Left cardiac atrium (tissue), 4 donors: ENCODE measurements at regions of chr6 and their contacts with region 1.

Region 1: GRCh38 chr6:16761471-16762267 is 409 bp upstream of the ATXN1 start:
- DNase-seq: peak; percentile 88
- ATAC-seq: peak; percentile 51 to 61

Region 2: GRCh38 chr6:16514249-16514648 is 247.4 kb before region 1 on chr6:
- intact Hi-C with region 1: loop called (anchors 5 to 10 kb)
- DNase-seq: no peak
- ATAC-seq: peak; percentile 59 to 66

Region 3: GRCh38 chr6:16540804-16541752 is 220.6 kb before region 1 on chr6:
- intact Hi-C with region 1: loop called in 1 of 2 experiments (anchors 5 kb)
- DNase-seq: peak; percentile 39
- ATAC-seq: peak; percentile 77